ENCODE measurements at regions of chr1 and their contacts with region 1.

Region 1: DNA sequence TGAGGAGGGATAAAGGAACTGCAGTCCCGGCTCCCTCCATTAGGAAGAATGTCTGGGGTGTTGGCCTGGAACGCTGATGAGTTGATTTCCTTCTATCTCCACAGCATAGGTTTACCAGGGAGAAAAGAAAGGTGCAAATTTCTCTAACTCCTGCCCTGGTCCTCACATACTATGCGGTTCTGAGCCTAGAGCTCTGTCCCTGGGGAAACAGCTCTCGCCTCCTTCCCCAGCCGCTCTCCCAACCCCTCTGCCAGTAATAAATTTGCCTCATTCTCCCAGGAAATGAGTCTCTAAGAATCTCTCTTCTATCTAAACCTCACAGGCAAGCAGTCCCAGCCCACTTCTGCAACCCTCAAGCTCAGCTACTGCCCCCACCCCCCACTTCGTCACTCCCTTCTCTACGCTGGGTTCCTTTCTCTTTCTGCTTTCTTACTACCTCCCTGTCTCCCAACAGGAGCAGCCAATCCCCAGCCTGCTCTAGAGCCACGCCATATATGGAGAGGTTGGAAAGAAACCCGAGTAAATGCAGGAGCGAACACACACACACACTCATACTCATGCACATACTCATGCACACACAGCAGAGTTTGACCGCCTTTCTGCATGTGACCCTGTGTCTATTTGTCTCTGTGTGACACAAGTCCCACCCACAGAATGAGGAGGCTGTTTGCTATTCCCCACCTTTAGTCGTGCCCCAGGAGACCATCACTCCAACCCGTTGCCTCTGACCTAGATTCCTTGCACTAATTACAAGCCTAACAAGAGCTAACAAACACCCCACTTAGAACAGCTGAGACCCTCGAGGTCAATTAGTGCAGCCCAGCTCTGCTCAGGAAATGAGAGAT is 13.4 kb downstream of the PLEKHO1 start:
- DNase-seq: peak; percentile 98
- H3K4me3 ChIP-seq: peak overlapping the region; percentile 31
- H3K27ac ChIP-seq: peak overlapping the region; percentile 99
- H3K4me1 ChIP-seq: peaks cover 22% of the 10 kb centered on the region
- H3K27me3 ChIP-seq: no peaks in the 10 kb centered on the region
- CTCF ChIP-seq: no peak

Region 2: GRCh38 chr1:149899460-149900293 is 263.4 kb before region 1 on chr1 and contains the start of gene BOLA1:
- CTCF ChIA-PET with region 1: no interaction called
- POLR2A ChIA-PET with region 1: no interaction called
- intact Hi-C with region 1: loop called (anchors 10 kb)
- DNase-seq: peak; percentile 97
- H3K4me3 ChIP-seq: peak within 1 kb of the TSS; percentile 51
- H3K27ac ChIP-seq: peak within 1 kb of the TSS; percentile 75
- H3K4me1 ChIP-seq: peaks cover 5% of the 10 kb centered on the region
- H3K27me3 ChIP-seq: no peaks in the 10 kb centered on the region
- CTCF ChIP-seq: no peak
- total RNA-seq, gene BOLA1: 15.7 and 18.8 TPM in 2 replicates

Region 3: GRCh38 chr1:150072959-150073358 is 90.1 kb before region 1 on chr1:
- CTCF ChIA-PET with region 1: interaction called, 20 read pairs
- POLR2A ChIA-PET with region 1: no interaction called
- intact Hi-C with region 1: loop called (anchors 1 kb)
- DNase-seq: peak; percentile 54
- H3K4me3 ChIP-seq: no peak overlapping the region
- H3K27ac ChIP-seq: no peak overlapping the region
- H3K4me1 ChIP-seq: peaks cover 11% of the 10 kb centered on the region
- H3K27me3 ChIP-seq: no peaks in the 10 kb centered on the region
- CTCF ChIP-seq: peak; percentile 69

Region 4: GRCh38 chr1:150149271-150150132 is 13.6 kb before region 1 on chr1 and contains the start of gene PLEKHO1:
- CTCF ChIA-PET with region 1: no interaction called
- POLR2A ChIA-PET with region 1: interaction called, 11 read pairs
- intact Hi-C with region 1: no loop called
- DNase-seq: peak; percentile 88
- H3K4me3 ChIP-seq: peak within 1 kb of the TSS; percentile 96
- H3K27ac ChIP-seq: peak within 1 kb of the TSS; percentile 96
- H3K4me1 ChIP-seq: peaks cover 23% of the 10 kb centered on the region
- H3K27me3 ChIP-seq: no peaks in the 10 kb centered on the region
- CTCF ChIP-seq: no peak
- total RNA-seq, gene PLEKHO1: 67.2 and 73.1 TPM in 2 replicates

Measured in A673 (cell line).